ENCODE measurements at regions of chr11 and their contacts with region 1.

Region 1: DNA sequence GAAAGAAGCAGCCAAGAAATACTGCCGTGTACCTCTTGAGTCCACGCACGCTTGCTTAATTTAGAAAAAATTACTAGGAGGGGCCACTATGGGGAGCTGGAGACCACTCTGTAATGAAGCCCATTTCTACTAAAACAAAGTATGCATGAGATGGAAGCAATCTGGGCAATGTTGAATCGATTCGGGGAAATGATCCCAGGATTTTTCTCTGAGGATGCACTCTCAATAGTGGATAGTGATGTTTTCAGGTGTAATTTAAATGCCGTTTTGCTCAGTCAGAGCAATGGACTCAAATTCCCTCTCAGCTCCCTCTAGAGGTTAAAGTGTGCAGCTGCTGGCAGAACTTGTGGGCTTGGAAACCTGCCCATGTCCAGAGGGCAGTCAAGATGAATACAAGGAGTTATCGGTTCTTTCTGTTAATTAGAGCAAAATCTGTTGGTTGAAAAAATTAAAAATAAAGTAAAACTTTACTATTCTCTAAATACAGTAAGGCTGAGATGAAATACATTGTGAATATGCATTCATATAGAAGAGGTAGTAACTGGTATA is 64.1 kb downstream of the ME3 start:
- DNase-seq: peak in 1 of 2 donors; percentile 84
- H3K4me3 ChIP-seq: peak overlapping the region; percentile 25 to 46
- H3K27ac ChIP-seq: peak overlapping the region in 1 of 2 donors; percentile 49
- H3K4me1 ChIP-seq: peaks cover 4 to 19% of the 10 kb centered on the region in 2 donors
- H3K27me3 ChIP-seq: no peaks in the 10 kb centered on the region
- CTCF ChIP-seq: peak; percentile 83 to 93 (median 83)

Region 2: GRCh38 chr11:86551286-86552092 is 56.8 kb before region 1 on chr11:
- intact Hi-C with region 1: no loop called
- DNase-seq: peak in 1 of 2 donors; percentile 77
- H3K4me3 ChIP-seq: no peak overlapping the region
- H3K27ac ChIP-seq: peak overlapping the region; percentile 63 to 78
- H3K4me1 ChIP-seq: peaks cover 5 to 35% of the 10 kb centered on the region in 2 donors
- H3K27me3 ChIP-seq: no peaks in the 10 kb centered on the region
- CTCF ChIP-seq: no peak

Region 3: DNA sequence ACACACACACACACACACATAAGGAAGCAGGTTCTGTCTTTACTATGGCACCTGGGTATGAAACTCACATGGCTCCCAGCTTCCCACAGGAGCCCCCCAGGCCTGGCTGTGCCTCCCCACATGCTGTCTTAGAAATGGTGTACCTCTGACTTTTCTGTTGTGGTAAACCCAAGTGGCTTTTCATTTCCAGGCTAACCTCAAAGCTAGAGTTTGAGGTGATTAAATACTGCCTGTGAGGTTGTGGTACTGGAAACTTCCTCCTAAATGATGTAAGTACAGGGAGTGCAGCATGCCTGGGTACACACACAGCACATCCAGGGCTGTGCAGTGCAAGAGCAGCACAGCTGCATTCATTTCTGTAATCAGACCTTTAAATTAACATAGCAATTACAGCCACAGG is 29.7 kb after region 1 on chr11:
- intact Hi-C with region 1: loop called (anchors 2 kb)
- DNase-seq: no peak
- H3K4me3 ChIP-seq: no peak overlapping the region
- H3K27ac ChIP-seq: no peak overlapping the region
- H3K4me1 ChIP-seq: peaks cover 0 to 10% of the 10 kb centered on the region in 2 donors
- H3K27me3 ChIP-seq: no peaks in the 10 kb centered on the region
- CTCF ChIP-seq: no peak

Region 4: DNA sequence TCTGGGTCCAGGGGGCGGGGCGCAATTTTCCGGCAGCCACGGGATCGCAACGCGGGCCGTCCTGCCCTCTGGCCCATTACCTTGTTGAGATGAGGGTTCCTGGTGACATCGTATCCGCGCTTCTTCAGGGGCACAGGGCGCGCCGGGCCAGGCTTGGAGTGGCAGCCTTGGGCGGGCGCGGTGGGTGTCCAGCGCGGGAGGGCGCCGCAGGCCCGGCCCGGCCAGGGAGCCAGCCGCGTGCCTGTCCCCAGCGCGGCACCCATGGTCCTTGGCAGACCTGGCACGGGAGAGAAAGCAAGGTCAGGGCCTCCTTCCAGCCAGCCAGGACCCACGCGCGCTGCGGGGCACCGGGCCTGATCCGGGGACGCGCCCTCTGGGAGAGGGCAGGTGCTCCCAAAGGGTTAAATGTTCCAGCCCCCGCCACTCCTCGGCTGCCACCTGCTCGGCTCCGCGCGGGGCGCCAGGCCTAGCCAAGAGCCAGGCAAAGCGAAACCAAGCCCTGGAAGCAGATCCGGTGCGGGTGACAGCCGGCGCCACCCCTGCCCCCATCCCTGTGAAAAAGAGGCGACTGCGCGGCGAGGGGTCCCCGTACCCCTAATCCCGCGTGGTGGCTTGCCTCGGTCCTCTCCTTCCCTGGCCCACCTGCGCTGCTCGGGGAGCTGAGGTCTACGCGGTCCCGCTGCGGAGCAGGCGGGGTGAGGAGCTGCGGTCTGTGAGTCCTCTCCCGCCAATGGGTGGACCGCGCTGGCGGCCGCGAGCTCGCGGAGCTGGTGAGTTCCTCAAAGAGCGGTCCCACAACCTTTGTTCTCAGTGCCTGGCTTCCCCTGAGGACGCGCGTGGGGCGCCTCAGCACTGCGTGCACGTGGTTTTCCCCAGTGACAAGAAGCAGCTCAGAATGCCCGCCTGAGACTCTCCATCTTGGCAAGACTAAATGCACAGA is 63.6 kb after region 1 on chr11 and contains the start of gene ME3:
- intact Hi-C with region 1: loop called (anchors 5 kb)
- DNase-seq: peak in 1 of 2 donors; percentile 85
- H3K4me3 ChIP-seq: peak within 1 kb of the TSS; percentile 81 to 95
- H3K27ac ChIP-seq: peak within 1 kb of the TSS; percentile 93 to 94
- H3K4me1 ChIP-seq: peaks cover 0 to 22% of the 10 kb centered on the region in 2 donors
- H3K27me3 ChIP-seq: no peaks in the 10 kb centered on the region
- CTCF ChIP-seq: peak in 1 of 3 experiments; percentile 11
- total RNA-seq, gene ME3: 34.2 TPM

Region 5: GRCh38 chr11:86802601-86803051 is 194.3 kb after region 1 on chr11:
- intact Hi-C with region 1: loop called (anchors 5 kb)
- DNase-seq: no peak
- H3K4me3 ChIP-seq: peak overlapping the region in 1 of 2 donors; percentile 67
- H3K27ac ChIP-seq: peak overlapping the region; percentile 67 to 76
- H3K4me1 ChIP-seq: peaks cover 0 to 16% of the 10 kb centered on the region in 2 donors
- H3K27me3 ChIP-seq: no peaks in the 10 kb centered on the region
- CTCF ChIP-seq: peak in 2 of 3 experiments; percentile 33 to 57

Region 6: DNA sequence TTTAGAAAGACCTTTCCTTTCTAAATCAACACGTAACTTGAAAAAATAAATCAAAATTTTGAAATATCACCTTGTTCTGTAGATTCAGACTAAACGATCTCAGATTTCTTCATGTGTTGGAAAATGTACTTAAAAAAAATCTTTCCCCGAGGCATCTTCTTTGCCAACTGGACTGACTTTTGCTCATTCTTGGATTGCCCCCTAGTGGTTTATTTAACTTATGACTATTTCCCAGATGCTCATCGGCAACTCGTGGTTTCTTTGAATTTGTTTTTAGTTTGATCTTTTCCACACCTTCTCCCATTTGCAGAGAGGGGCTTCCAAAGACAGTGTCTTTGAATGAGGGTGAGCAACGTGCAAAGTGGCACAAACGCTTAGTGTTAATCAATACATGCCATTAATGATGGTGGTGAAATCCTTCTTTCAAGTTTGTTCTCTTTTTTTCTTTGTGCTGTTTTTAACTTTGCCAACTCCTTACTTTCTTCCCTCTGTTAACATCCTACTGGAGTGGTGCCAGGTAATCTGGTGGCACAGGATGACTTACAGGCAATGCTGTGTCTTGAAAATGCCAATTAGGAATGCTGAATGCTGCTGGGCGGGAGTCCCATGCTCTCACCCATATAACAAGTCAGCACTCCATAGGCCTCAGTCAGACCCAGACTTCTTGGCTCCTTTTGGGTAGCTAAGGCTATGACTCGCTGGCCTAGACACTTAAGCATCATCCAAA is 210.3 kb after region 1 on chr11:
- intact Hi-C with region 1: loop called (anchors 1 kb)
- DNase-seq: no peak
- H3K4me3 ChIP-seq: peak overlapping the region in 1 of 2 donors; percentile 26
- H3K27ac ChIP-seq: no peak overlapping the region
- H3K4me1 ChIP-seq: peaks cover 8 to 41% of the 10 kb centered on the region in 2 donors
- H3K27me3 ChIP-seq: no peaks in the 10 kb centered on the region
- CTCF ChIP-seq: peak; percentile 56 to 73 (median 71)

Region 7: DNA sequence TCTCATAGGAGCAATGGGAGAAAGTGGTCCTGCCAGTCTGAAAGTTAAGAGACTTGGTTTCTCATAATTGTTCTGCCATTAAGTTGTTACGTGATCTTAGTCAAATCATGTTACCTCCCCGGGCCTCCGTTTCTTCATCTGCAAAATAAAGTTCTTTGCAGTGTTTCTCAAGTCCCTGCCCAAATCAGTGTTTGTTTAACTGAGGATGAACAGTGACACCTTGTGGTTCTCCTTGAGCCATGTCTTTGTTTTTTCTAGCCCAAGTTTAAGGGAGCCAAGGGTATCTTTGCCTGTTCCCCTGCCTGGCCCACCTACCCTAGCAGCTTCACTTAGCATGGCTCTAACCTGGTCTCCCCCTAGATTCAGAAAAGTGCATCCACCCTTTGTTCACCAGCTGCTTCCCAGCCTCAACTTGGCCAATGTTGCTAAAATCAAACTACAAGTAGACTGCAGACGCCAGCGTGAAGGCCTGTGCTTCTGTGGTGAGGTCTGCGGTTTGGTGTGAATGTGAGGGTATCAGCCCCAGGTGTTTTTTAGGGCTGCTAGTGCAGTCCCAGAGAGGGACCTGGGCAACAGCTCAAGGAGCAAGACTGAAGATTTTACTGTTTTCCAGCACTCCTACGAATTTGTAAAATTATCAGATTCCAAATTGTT is 311.4 kb after region 1 on chr11:
- intact Hi-C with region 1: loop called (anchors 5 kb)
- DNase-seq: no peak
- H3K4me3 ChIP-seq: peak overlapping the region in 1 of 2 donors; percentile 6
- H3K27ac ChIP-seq: peak overlapping the region; percentile 85 to 89
- H3K4me1 ChIP-seq: peaks cover 8 to 57% of the 10 kb centered on the region in 2 donors
- H3K27me3 ChIP-seq: no peaks in the 10 kb centered on the region
- CTCF ChIP-seq: peak; percentile 52 to 65 (median 59)

Measured in ascending aorta (tissue), 2 donors.